Activated CD8-positive, alpha-beta memory T cell treated with anti-CD3 and anti-CD28 coated beads, Interleukin-2, amount 10 ng/mL, durations not matched to agents 7 days and 5 days (primary cell): ENCODE measurements at regions of chr10 and their contacts with region 1.

Region 1: DNA sequence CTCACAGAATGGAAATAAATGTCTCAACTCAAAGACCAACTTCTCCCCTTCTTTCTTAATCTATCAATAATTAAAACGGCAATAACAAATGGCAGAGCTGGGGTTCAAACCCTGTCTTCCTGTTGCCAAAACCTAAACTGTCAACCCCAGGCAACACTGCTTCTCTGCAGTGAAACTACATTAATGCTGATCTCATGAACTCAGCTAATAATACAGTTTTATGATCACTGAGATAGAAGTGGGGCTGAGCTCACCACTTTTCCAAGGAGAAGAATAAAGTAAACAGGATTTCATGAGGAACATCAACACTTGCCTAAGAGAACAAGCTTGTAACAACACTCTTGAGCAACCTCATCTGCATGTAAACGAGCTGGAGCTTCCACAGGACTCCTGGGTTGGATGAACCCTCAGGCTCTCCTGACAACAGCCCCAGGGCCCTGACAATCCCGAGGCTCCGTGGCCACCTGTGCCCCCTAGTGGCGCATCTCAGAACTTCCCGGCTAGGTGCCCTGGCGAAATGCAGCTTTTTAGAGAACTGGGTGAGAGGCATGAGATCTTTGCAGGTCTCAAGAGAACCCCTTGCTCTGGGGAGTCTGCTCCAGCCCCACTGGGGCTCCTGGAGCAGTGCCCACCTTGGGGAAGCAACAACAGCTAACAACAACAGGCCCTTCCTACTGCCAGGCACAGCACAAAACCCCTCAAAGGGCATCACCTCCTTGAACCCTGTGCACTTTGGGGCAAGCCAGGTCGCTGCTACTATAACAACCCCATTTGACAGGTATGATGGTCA is 169.3 kb downstream of the SH3PXD2A start:
- DNase-seq: peak; percentile 82
- ATAC-seq: peak; percentile 86
- H3K4me3 Mint-ChIP-seq: no peak overlapping the region
- H3K27ac Mint-ChIP-seq: no peak overlapping the region
- H3K4me1 Mint-ChIP-seq: peaks cover 2% of the 10 kb centered on the region
- H3K27me3 Mint-ChIP-seq: peaks cover 2% of the 10 kb centered on the region

Region 2: GRCh38 chr10:103512196-103512990 is 173.7 kb before region 1 on chr10:
- CTCF ChIA-PET with region 1: no interaction called
- DNase-seq: no peak
- ATAC-seq: no peak
- H3K4me3 Mint-ChIP-seq: no peak overlapping the region
- H3K27ac Mint-ChIP-seq: no peak overlapping the region
- H3K4me1 Mint-ChIP-seq: peaks cover 12% of the 10 kb centered on the region
- H3K27me3 Mint-ChIP-seq: peaks cover 20% of the 10 kb centered on the region

Region 3: DNA sequence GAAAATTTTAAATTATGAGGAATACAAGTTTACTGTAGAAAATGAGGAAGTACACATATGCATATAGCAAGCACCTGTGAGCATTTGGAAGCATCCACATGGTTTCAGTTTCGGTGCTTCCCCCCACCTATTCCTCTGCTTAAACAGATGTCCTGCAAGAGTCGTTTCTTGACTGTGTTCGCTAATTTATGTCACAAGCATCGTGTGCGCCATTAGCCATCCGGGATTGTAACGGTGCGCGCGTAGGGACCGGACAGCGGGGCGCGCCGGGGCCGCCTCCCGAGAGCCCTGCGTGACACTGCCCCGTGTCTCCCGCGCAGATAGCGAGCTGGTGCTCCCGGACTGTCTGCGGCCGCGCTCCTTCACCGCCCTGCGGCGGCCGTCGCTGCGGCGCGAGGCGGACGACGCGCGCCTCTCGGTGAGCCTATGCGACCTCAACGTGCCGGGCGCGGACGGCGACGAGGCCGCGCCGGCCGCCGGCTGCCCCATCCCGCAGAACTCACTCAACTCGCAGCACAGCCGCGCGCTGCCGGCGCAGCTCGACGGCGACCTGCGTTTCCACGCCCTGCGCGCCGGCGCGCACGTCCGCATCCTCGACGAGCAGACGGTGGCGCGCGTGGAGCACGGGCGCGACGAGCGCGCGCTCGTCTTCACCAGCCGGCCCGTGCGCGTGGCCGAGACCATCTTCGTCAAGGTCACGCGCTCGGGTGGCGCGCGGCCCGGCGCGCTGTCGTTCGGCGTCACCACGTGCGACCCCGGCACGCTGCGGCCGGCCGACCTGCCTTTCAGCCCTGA is 101.7 kb before region 1 on chr10:
- CTCF ChIA-PET with region 1: interaction called, 15 read pairs
- DNase-seq: peak; percentile 83
- ATAC-seq: peak; percentile 82
- H3K4me3 Mint-ChIP-seq: peak overlapping the region; percentile 79
- H3K27ac Mint-ChIP-seq: peak overlapping the region; percentile 84
- H3K4me1 Mint-ChIP-seq: peaks cover 26% of the 10 kb centered on the region
- H3K27me3 Mint-ChIP-seq: peaks cover 10% of the 10 kb centered on the region

Region 4: DNA sequence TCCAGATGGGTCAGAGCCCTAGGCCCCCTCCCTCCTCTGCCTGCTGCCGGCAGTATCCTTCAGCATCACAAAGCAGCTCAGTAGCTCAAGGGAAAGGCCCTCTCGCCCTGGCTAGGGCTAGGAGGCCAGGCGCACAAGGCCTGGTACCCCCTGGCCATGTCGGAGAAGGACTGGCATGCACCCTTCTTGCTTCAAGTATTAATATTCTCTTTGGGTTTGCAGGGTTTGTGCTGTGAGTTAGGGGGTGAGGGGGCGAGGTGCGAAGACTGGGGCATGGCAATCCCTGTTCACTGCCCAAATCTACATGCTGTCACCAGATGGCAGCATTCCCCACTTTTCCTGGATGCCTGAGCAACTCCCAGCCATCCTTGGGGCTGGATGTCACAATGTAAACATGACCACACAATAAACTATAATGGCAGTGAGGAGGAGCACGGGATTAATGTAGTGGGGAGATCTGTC is 87.4 kb before region 1 on chr10:
- CTCF ChIA-PET with region 1: interaction called, 72 read pairs
- DNase-seq: no peak
- ATAC-seq: no peak
- H3K4me3 Mint-ChIP-seq: no peak overlapping the region
- H3K27ac Mint-ChIP-seq: no peak overlapping the region
- H3K4me1 Mint-ChIP-seq: peaks cover 2% of the 10 kb centered on the region
- H3K27me3 Mint-ChIP-seq: no peaks in the 10 kb centered on the region

Region 5: DNA sequence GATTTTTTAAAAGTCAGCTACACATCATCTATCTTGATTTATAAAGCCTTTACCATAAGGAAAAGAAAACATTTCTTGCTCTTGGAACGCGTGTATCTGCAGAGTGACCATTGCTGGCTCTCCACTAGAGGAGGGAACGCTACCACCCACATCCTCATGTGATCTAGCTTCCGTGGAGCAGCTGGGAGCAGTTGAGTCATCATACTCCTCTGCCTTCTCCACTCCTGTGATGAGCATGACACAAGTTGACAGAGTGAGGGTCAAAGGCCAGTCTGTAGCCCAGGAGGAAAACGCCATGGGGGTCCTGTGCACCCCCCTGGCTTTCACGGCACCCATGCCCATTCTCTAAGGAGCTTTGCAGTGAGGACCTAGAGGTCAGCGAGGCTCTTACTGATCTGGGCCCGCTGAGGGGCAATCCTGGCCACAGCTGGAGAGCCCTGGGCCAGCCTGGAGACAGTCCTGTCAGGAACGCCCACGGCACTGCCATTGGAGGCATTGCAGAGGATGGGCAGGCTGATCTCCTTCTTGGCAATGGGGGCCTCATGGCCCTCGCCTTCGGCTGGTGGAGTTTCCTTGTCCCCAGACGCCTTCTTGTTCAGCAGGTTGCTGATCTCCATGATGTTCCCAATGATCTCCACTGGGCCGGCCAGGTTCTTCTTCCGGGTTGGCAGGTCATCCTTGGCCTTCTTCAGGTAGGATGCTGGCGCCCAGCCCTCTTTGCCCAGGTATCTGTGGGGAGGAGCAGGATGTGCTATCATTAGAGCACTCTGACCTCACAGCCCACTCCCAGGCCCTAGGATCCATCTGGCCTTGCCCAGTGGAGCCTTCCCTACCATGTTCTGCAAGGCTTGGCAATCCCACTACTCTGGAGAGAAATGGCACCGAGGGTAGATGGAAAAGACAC is 73.4 kb before region 1 on chr10:
- CTCF ChIA-PET with region 1: interaction called, 23 read pairs
- DNase-seq: no peak
- ATAC-seq: no peak
- H3K4me3 Mint-ChIP-seq: no peak overlapping the region
- H3K27ac Mint-ChIP-seq: no peak overlapping the region
- H3K4me1 Mint-ChIP-seq: peaks cover 7% of the 10 kb centered on the region
- H3K27me3 Mint-ChIP-seq: no peaks in the 10 kb centered on the region

Region 6: GRCh38 chr10:103666087-103666761 is 19.9 kb before region 1 on chr10:
- CTCF ChIA-PET with region 1: interaction called, 29 read pairs
- DNase-seq: no peak
- ATAC-seq: no peak
- H3K4me3 Mint-ChIP-seq: no peak overlapping the region
- H3K27ac Mint-ChIP-seq: no peak overlapping the region
- H3K4me1 Mint-ChIP-seq: peaks cover 10% of the 10 kb centered on the region
- H3K27me3 Mint-ChIP-seq: no peaks in the 10 kb centered on the region

Region 7: DNA sequence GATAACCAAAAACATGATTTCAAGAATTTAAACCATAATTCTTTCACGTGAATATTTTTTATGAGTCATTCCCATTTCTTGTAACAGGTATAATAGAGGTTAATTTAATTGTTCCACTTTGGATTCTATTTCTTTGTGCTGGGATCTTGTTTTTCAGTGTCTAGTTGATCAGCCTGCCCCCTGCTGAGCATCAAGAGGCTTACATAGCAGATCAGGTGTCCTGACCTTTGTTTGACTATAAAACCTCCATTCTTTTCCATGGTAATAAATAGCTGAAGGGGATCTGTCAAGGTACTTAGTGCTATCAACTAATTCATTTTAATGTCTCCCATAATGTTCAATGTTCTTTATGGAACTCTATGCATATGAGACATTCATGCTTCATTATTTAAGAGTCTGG is 394.7 kb after region 1 on chr10:
- CTCF ChIA-PET with region 1: no interaction called
- DNase-seq: no peak
- ATAC-seq: peak; percentile 49
- H3K4me3 Mint-ChIP-seq: no peak overlapping the region
- H3K27ac Mint-ChIP-seq: no peak overlapping the region
- H3K4me1 Mint-ChIP-seq: no peaks in the 10 kb centered on the region
- H3K27me3 Mint-ChIP-seq: no peaks in the 10 kb centered on the region